Left ventricle myocardium inferior (tissue), 1 donor: ENCODE measurements at regions of chr1 and their contacts with region 1.

Region 1: DNA sequence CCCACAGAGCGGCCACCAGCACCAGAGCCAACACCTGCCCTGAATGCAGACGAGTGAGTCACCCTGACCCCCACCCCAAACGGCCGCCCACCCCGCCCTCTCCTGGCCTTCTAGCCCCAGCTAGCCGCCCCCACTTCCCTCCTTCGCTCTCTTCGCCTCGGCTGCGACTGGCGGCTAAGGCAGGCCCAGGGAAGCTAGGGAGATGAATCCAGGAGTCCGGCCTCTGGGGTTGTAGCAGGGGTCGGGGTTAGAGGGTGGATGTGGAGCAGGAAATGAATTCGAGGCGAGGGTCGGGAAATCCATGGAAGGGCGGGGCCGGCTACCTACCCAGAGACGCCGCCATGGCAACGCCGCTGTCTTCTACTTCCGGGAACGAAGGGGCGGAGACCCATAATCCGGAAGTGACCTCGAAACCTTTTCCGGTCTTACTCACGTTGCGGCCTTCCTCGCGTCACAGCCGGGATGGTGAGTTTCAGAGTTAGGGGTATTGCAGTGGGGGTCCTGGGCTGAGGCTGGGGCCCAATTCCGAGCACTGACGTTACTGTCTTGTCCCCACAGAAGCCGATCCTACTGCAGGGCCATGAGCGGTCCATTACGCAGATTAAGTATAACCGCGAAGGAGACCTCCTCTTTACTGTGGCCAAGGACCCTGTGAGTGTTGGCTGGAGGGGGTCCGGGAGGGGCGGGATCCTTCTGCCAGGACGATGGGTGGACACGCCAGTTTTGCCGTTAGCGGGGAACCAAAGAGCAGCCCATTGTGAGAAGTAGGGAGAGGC is at the starts of genes EIF3I and TMEM234:
- DNase-seq: peak; percentile 91
- H3K4me3 ChIP-seq: peak within 1 kb of the TSS; percentile 98
- H3K27ac ChIP-seq: peak within 1 kb of the TSS; percentile 92
- H3K4me1 ChIP-seq: peaks cover 44% of the 10 kb centered on the region
- H3K27me3 ChIP-seq: no peaks in the 10 kb centered on the region
- CTCF ChIP-seq: no peak
- total RNA-seq, gene EIF3I: 91.1 TPM
- total RNA-seq, gene TMEM234: 10.9 TPM

Region 2: DNA sequence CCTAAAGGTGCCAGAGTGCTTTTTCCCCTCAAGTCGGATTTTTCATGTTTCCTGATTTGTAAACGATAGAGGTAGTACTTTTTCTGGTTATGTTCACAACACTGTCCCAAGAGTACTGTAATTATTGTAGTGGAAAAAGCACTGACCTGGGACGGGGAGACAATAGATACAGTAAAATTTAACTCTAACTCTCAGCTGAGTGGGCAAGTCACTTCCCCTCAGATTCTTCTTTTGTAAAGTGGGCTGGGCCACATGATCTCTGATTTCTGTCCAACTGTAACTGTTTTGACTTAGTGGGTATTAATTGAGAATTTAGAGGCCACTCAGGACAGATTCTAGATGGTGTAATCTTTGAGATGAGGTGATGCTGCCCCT is 94.7 kb after region 1 on chr1:
- intact Hi-C with region 1: loop called (anchors 10 kb)
- DNase-seq: no peak
- H3K4me3 ChIP-seq: no peak overlapping the region
- H3K27ac ChIP-seq: no peak overlapping the region
- H3K4me1 ChIP-seq: peaks cover 24% of the 10 kb centered on the region
- H3K27me3 ChIP-seq: no peaks in the 10 kb centered on the region
- CTCF ChIP-seq: no peak